Activated CD8-positive, alpha-beta T cell treated with anti-CD3 and anti-CD28 coated beads, Interleukin-2, amount 10 ng/mL, durations not matched to agents 7 days and 5 days (primary cell): ENCODE measurements at regions of chr5 and their contacts with region 1.

Region 1: DNA sequence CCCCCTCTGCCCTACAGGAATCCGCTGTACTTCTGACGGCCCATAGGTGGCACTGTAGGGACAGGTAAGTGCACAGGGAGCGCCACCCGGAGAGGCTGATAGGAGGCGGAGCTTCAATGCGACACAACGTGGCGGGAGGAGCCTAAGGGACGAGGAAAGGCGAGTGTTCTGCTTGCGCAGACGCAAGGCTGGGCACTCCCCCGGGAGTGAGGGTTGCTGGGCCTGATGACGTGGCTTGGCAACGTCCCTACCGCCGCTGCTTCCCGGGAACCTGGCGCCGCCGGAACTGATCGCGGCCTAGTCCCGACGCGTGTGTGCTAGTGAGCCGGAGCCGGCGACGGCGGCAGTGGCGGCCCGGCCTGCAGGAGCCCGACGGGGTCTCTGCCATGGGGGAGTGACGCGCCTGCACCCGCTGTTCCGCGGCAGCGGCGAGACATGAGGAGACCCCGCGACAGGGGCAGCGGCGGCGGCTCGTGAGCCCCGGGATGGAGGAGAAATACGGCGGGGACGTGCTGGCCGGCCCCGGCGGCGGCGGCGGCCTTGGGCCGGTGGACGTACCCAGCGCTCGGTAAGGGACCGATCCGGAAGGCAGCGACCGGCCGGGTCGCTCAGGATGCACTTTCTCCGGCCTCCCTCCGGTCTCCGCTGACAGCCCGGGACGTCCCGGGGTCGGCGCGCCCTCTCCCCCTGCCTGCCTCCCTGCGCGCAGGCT is at the start of gene SLC30A5:
- DNase-seq: peak; percentile 100
- ATAC-seq: peak; percentile 99
- H3K4me3 Mint-ChIP-seq: peak within 1 kb of the TSS; percentile 91
- H3K27ac Mint-ChIP-seq: peak within 1 kb of the TSS; percentile 93
- H3K4me1 Mint-ChIP-seq: peaks cover 30% of the 10 kb centered on the region
- H3K27me3 Mint-ChIP-seq: no peaks in the 10 kb centered on the region
- total RNA-seq, gene SLC30A5: 32.7 to 33.6 TPM

Region 2: GRCh38 chr5:69042915-69043658 is 50.8 kb before region 1 on chr5:
- CTCF ChIA-PET with region 1: interaction called, 24 read pairs
- POLR2A ChIA-PET with region 1: no interaction called
- DNase-seq: peak; percentile 91
- ATAC-seq: peak; percentile 96
- H3K4me3 Mint-ChIP-seq: peak overlapping the region; percentile 72
- H3K27ac Mint-ChIP-seq: peak overlapping the region; percentile 81
- H3K4me1 Mint-ChIP-seq: peaks cover 11% of the 10 kb centered on the region
- H3K27me3 Mint-ChIP-seq: no peaks in the 10 kb centered on the region

Region 3: DNA sequence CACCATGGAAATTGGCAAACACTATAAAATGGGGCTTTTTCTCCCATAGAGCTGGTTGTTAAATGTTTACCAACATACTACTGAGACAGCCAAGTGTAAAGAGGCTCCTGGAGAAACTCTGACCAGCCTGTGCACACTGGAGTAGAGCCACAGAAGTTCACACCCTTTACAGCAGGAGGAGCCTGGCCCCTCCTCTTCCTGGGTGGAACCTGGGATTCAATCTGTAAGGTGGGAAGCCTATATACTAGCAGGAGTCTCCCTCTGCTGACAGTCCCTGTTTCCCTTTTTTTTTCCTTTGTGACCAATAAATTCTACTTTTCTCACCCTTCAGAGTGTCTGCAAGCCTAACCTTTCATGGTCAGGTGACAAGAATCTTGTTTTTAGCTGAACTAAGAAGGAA is 10.5 kb before region 1 on chr5:
- CTCF ChIA-PET with region 1: interaction called, 49 read pairs
- POLR2A ChIA-PET with region 1: interaction called, 5 read pairs
- DNase-seq: no peak
- ATAC-seq: no peak
- H3K4me3 Mint-ChIP-seq: no peak overlapping the region
- H3K27ac Mint-ChIP-seq: no peak overlapping the region
- H3K4me1 Mint-ChIP-seq: peaks cover 23% of the 10 kb centered on the region
- H3K27me3 Mint-ChIP-seq: no peaks in the 10 kb centered on the region

Region 4: DNA sequence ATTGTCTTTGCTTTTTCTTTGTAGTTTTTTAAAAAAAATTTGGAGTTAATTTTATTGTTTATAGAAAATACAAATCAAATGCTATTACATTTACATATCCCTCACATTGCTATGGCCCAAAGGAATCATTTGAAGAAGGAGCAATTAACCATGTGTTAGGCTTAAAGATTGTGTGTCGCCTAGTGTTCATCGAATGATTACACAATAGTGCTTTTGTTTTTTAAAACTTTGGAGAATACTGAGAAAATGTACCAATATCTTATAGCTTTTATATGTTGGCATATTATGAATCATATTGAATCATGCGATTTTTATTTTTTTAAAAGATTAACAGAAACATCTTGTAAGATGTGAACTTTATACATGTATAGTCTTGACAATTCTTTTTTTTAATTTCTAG is 21.6 kb after region 1 on chr5:
- CTCF ChIA-PET with region 1: interaction called, 10 read pairs
- POLR2A ChIA-PET with region 1: no interaction called
- DNase-seq: no peak
- ATAC-seq: no peak
- H3K4me3 Mint-ChIP-seq: no peak overlapping the region
- H3K27ac Mint-ChIP-seq: no peak overlapping the region
- H3K4me1 Mint-ChIP-seq: no peaks in the 10 kb centered on the region
- H3K27me3 Mint-ChIP-seq: no peaks in the 10 kb centered on the region

Region 5: DNA sequence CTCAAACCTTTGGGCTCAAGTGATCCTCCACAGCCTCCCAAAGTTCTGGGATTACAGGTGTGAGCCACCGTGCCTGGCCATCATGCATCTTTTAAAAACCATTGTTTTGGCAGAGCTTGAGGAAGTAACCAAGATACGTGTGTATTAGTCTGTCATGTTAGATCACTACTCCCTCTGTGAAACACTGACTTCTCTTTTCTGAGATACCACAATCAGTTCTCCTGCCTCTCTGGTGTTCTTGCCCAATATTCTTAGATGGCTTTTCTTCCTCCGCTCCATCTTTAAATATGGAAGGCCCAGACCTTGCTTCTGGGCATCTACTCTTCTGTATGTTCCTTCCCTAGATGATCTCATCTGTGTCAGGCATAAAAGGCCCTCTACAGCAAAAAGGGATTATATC is 58.8 kb after region 1 on chr5:
- CTCF ChIA-PET with region 1: no interaction called
- POLR2A ChIA-PET with region 1: no interaction called
- DNase-seq: no peak
- ATAC-seq: no peak
- H3K4me3 Mint-ChIP-seq: no peak overlapping the region
- H3K27ac Mint-ChIP-seq: no peak overlapping the region
- H3K4me1 Mint-ChIP-seq: no peaks in the 10 kb centered on the region
- H3K27me3 Mint-ChIP-seq: no peaks in the 10 kb centered on the region

Region 6: GRCh38 chr5:69166686-69167492 is 73.0 kb after region 1 on chr5 and contains the start of gene CCNB1:
- CTCF ChIA-PET with region 1: interaction called, 36 read pairs
- POLR2A ChIA-PET with region 1: interaction called, 10 read pairs
- DNase-seq: peak; percentile 99
- ATAC-seq: peak; percentile 99
- H3K4me3 Mint-ChIP-seq: peak within 1 kb of the TSS; percentile 89
- H3K27ac Mint-ChIP-seq: peak within 1 kb of the TSS; percentile 93
- H3K4me1 Mint-ChIP-seq: peaks cover 45% of the 10 kb centered on the region
- H3K27me3 Mint-ChIP-seq: no peaks in the 10 kb centered on the region
- total RNA-seq, gene CCNB1: 205 to 218 TPM

Region 7: GRCh38 chr5:69189162-69190086 is 95.5 kb after region 1 on chr5 and contains the start of gene CENPH:
- CTCF ChIA-PET with region 1: interaction called, 12 read pairs
- POLR2A ChIA-PET with region 1: interaction called, 14 read pairs
- DNase-seq: peak; percentile 96
- ATAC-seq: peak; percentile 84
- H3K4me3 Mint-ChIP-seq: peak within 1 kb of the TSS; percentile 96
- H3K27ac Mint-ChIP-seq: peak within 1 kb of the TSS; percentile 97
- H3K4me1 Mint-ChIP-seq: peaks cover 17% of the 10 kb centered on the region
- H3K27me3 Mint-ChIP-seq: no peaks in the 10 kb centered on the region
- total RNA-seq, gene CENPH: 48.5 to 50.1 TPM

Region 8: GRCh38 chr5:69242225-69242961 is 148.5 kb after region 1 on chr5:
- CTCF ChIA-PET with region 1: no interaction called
- POLR2A ChIA-PET with region 1: no interaction called
- DNase-seq: no peak
- ATAC-seq: no peak
- H3K4me3 Mint-ChIP-seq: no peak overlapping the region
- H3K27ac Mint-ChIP-seq: no peak overlapping the region
- H3K4me1 Mint-ChIP-seq: peaks cover 21% of the 10 kb centered on the region
- H3K27me3 Mint-ChIP-seq: no peaks in the 10 kb centered on the region

Region 9: DNA sequence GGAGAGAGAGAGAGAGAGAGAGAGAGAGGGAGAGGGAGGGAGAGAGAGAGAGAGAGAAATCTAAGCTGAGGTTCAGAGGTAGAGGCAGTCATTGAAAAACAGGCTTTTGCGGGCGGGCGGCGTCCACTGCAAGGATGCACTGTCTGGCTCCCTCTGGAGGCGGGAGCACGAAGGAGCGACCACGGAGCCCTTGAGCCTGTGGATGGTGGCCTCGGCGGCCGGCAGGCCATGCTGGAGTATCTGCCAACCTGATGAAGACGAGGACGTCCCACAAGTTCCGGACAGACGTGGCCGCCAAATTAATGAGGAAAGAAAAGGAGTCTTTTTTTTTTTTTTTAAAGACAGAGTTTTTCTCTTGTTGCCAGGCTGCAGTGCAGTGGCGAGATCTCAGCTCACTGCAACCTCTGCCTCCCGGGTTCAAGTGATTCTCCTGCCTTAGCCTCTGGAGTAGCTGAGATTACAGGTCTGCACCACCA is 240.9 kb after region 1 on chr5:
- CTCF ChIA-PET with region 1: interaction called, 36 read pairs
- POLR2A ChIA-PET with region 1: no interaction called
- DNase-seq: peak; percentile 87
- ATAC-seq: peak; percentile 70
- H3K4me3 Mint-ChIP-seq: no peak overlapping the region
- H3K27ac Mint-ChIP-seq: no peak overlapping the region
- H3K4me1 Mint-ChIP-seq: peaks cover 21% of the 10 kb centered on the region
- H3K27me3 Mint-ChIP-seq: no peaks in the 10 kb centered on the region